Psoas muscle (tissue), 8 donors: ENCODE measurements at regions of chr19 and their contacts with region 1.

Region 1: DNA sequence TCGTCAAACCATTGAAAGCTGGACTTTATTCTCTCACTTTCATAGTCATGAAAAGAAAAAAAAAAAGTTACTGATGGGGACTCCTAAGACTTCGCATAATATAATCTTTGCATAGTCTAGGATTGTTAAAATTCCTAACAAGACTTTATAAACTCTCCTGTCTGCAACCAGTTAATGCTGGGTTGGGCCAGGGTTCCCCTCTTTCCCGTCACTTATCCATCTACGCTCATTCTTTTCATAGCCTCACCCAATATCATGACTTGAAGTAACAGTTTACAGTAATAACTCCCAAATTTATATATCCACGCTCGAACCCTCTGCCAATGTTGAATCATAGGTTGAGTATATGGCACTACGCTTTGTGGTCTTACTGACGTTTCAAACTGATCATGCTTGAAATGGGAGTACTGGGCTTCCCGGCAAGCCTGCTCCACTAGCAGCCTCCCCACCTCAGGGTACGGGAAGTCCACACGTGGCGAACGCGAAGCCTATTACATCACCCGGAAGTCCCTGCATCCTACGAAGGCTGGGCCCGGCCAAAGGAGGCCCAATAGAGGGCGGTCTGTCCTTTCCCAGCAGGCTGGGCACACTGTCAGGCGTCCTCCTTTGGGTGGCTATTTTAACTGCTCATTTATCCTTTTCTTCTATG is 743 bp upstream of the ZNF460 start:
- DNase-seq: peak; percentile 92 to 94
- ATAC-seq: peak; percentile 93 to 95 (median 94)
- H3K4me3 ChIP-seq: peak overlapping the region; percentile 86
- H3K27ac ChIP-seq: peak overlapping the region; percentile 99
- H3K4me1 ChIP-seq: peaks cover 36% of the 10 kb centered on the region
- H3K27me3 ChIP-seq: no peaks in the 10 kb centered on the region
- CTCF ChIP-seq: peak; percentile 19

Region 2: DNA sequence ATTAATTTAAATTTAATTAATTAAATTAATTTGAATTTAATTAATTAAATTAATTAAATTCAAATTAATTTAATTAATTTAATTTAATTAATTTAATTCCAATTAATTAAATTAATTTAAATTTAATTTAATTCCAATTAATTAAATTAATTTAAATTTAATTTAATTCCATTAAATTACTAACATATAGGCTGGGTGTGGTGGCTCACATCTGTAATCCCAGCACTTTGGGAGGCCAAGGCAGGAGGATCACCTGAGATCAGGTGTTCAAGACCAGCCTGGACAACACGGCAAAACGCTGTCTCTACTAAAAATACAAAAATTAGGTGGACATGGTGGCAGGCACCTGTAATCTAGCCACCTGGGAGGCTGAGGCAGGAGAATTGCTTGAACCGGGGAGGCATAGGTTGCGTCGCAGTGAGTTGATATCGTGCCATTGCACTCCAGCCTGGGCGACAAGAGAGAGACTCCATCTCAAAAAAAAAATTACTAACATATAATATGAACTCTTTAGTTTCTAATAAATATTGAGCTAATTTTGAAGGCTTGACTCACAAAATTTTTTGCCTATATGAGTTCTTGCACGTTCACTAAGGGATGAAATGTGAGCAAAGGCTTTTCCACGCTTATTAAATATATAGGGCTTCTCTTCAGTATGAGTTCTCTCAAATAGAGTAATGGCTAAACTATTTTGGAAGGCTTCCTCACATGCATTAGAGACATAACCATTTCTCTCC is 168.8 kb before region 1 on chr19:
- intact Hi-C with region 1: no loop called
- DNase-seq: no peak
- ATAC-seq: no peak
- H3K4me3 ChIP-seq: no peak overlapping the region
- H3K27ac ChIP-seq: no peak overlapping the region
- H3K4me1 ChIP-seq: no peaks in the 10 kb centered on the region
- H3K27me3 ChIP-seq: peaks cover 0 to 11% (median 0%) of the 10 kb centered on the region in 3 donors
- CTCF ChIP-seq: no peak

Region 3: DNA sequence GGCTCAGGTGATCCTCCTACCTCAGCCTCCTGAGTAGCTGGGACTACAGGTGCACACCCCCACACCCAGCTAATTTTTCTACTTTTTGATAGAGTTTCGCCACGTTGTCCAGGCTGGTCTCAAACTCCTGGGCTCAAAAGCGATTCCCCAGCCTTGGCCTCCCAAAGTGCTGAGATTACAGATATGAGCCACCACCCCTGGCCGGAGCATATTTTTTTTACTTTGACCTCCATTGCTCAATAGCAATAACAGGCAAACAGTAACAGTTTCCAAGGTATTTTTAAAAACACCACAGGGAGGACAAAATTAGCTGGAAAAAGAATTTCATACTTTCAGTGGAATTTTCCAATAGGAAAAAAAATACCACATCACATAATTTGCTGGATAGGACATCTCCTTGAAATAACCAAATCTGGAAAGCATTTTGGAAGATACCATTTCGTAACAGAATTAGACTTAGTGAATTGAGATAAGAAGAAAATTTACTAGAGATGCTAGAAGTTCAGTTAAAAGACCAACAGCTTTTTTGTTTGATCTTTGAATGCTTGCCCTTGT is 117.5 kb before region 1 on chr19:
- intact Hi-C with region 1: no loop called
- DNase-seq: no peak
- ATAC-seq: no peak
- H3K4me3 ChIP-seq: no peak overlapping the region
- H3K27ac ChIP-seq: no peak overlapping the region
- H3K4me1 ChIP-seq: no peaks in the 10 kb centered on the region
- H3K27me3 ChIP-seq: no peaks in the 10 kb centered on the region
- CTCF ChIP-seq: no peak

Region 4: GRCh38 chr19:57240311-57241090 is 39.0 kb before region 1 on chr19 and contains the start of gene ZNF805:
- intact Hi-C with region 1: loop called (anchors 2 to 5 kb)
- DNase-seq: peak; percentile 97 to 99
- ATAC-seq: peak; percentile 99
- H3K4me3 ChIP-seq: peak within 1 kb of the TSS; percentile 97
- H3K27ac ChIP-seq: peak within 1 kb of the TSS; percentile 97
- H3K4me1 ChIP-seq: peaks cover 20% of the 10 kb centered on the region
- H3K27me3 ChIP-seq: no peaks in the 10 kb centered on the region
- CTCF ChIP-seq: peak; percentile 18
- total RNA-seq, gene ZNF805: 10.3 to 16.4 (median 12.7) TPM

Region 5: GRCh38 chr19:57362997-57363705 is 83.6 kb after region 1 on chr19 and contains the starts of genes TRAPPC2B and ZNF547:
- intact Hi-C with region 1: loop called in 1 of 2 experiments (anchors 1 kb)
- DNase-seq: peak; percentile 99 to 100
- ATAC-seq: peak; percentile 94 to 96 (median 95)
- H3K4me3 ChIP-seq: peak within 1 kb of the TSS; percentile 91
- H3K27ac ChIP-seq: peak within 1 kb of the TSS; percentile 98
- H3K4me1 ChIP-seq: no peaks in the 10 kb centered on the region
- H3K27me3 ChIP-seq: no peaks in the 10 kb centered on the region
- CTCF ChIP-seq: no peak
- total RNA-seq, gene TRAPPC2B: 12.6 to 21.3 (median 17.5) TPM
- total RNA-seq, gene ZNF547: 1.1 to 2.8 (median 1.9) TPM